ENCODE measurements at regions of chr11 and their contacts with region 1.

Region 1: DNA sequence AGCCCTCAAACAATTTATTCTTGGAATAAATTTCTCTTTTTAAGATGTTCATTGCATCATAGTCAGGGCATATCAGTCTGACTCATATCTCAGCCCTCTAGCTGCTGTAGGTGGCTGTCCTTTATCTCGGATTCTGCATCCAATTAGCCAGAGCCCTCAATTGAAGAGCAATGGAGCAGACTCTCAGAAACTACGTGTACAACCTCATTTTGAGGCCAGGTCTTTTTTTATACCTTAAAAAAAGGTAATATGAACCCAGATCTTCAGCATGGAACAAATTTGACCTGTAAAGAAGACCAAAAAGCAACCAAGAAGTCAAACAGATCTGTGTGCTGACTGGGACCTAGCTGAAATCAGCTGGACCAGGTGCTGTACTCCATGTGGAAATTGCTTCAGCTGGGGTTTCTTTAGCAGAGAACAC is 8.7 kb downstream of the OR52A5 start:
- DNase-seq: no peak
- ATAC-seq: no peak
- H3K4me3 ChIP-seq: no peak overlapping the region
- H3K4me3 Mint-ChIP-seq: no peak overlapping the region
- H3K27ac ChIP-seq: no peak overlapping the region
- H3K27ac Mint-ChIP-seq: no peak overlapping the region
- H3K4me1 ChIP-seq: no peaks in the 10 kb centered on the region
- H3K4me1 Mint-ChIP-seq: no peaks in the 10 kb centered on the region
- H3K27me3 ChIP-seq: no peaks in the 10 kb centered on the region
- H3K27me3 Mint-ChIP-seq: peaks cover 0 to 11% (median 8%) of the 10 kb centered on the region in 5 donors

Region 2: GRCh38 chr11:5522308-5522707 is 392.8 kb after region 1 on chr11:
- CTCF ChIA-PET with region 1: no interaction called
- POLR2A ChIA-PET with region 1: no interaction called
- intact Hi-C with region 1: no loop called
- DNase-seq: no peak
- ATAC-seq: no peak
- H3K4me3 ChIP-seq: no peak overlapping the region
- H3K4me3 Mint-ChIP-seq: no peak overlapping the region
- H3K27ac ChIP-seq: no peak overlapping the region
- H3K27ac Mint-ChIP-seq: no peak overlapping the region
- H3K4me1 ChIP-seq: no peaks in the 10 kb centered on the region
- H3K4me1 Mint-ChIP-seq: peaks cover 0 to 5% (median 0%) of the 10 kb centered on the region in 7 donors
- H3K27me3 ChIP-seq: no peaks in the 10 kb centered on the region
- H3K27me3 Mint-ChIP-seq: no peaks in the 10 kb centered on the region

Region 3: DNA sequence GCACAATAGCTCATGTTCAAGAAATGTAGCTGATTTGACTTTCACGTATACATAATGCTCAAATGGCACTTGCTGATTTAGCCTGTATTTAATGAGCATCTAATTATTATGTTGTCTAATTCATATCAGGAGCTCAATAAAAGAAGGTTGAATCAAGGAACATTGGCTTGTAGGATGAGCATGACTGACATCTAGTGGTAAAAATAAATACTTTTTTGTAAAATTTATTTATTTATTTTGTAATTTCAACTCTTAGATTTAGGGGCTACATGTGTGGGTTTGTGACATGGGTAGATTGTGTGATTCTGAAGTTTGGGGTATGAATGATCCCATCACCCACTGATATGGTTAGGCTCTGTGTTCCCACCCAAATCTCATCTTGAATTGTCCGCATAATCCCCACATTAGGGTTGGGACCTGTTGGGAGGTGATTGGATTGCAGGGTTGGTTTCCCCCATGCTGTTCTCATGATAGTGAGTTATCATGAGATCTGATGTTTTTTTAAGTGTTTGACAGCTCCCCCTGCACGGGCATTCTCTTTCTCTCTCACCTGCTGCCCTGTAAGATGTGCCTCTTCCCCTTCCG is 761.8 kb after region 1 on chr11:
- CTCF ChIA-PET with region 1: interaction called, 4 read pairs
- POLR2A ChIA-PET with region 1: no interaction called
- intact Hi-C with region 1: loop called in 1 of 2 experiments (anchors 5 kb)
- DNase-seq: peak in 3 of 9 donors; percentile 0 to 10 (median 1)
- ATAC-seq: no peak
- H3K4me3 ChIP-seq: no peak overlapping the region
- H3K4me3 Mint-ChIP-seq: no peak overlapping the region
- H3K27ac ChIP-seq: no peak overlapping the region
- H3K27ac Mint-ChIP-seq: no peak overlapping the region
- H3K4me1 ChIP-seq: no peaks in the 10 kb centered on the region
- H3K4me1 Mint-ChIP-seq: no peaks in the 10 kb centered on the region
- H3K27me3 ChIP-seq: peaks cover 5% of the 10 kb centered on the region in 2 donors
- H3K27me3 Mint-ChIP-seq: peaks cover 7 to 27% (median 20%) of the 10 kb centered on the region in 5 donors